GM13977 (cell line): ENCODE measurements at regions of chr4 and their contacts with region 1.

Region 1: GRCh38 chr4:115234405-115235093 is 121.1 kb upstream of the NDST4 start:
- DNase-seq: peak; percentile 17
- CTCF ChIP-seq: peak; percentile 47

Region 2: DNA sequence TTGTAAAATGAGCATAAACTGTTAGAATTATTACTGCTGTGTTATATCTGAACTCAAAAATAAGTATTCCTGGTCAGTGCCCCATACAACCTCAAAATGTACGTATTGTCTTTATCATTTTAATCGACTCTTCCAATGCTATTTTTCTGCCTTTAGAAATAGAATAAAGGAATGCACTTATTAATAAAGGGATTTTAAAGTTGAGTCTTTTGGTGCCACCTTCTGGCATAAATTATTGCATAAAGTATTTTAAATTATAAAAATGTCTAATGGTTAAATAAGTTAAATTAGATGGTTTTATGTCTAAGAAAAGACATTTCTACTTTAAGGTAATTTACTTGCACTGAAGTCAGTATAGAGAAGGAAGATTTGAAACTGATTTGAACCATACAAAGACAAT is 302.8 kb after region 1 on chr4:
- in situ Hi-C with region 1: loop called (anchors 25 kb)
- DNase-seq: no peak
- CTCF ChIP-seq: no peak